Activated naive CD4-positive, alpha-beta T cell treated with anti-CD3 and anti-CD28 coated beads for 36 hours (primary cell): ENCODE measurements at regions of chr15 and their contacts with region 1.

Region 1: GRCh38 chr15:29925227-29926082 is 103.2 kb upstream of the TJP1 start:
- DNase-seq: peak; percentile 53
- H3K4me3 Mint-ChIP-seq: no peak overlapping the region
- H3K27ac Mint-ChIP-seq: no peak overlapping the region
- H3K4me1 Mint-ChIP-seq: no peaks in the 10 kb centered on the region
- H3K27me3 Mint-ChIP-seq: peaks cover 46% of the 10 kb centered on the region

Region 2: DNA sequence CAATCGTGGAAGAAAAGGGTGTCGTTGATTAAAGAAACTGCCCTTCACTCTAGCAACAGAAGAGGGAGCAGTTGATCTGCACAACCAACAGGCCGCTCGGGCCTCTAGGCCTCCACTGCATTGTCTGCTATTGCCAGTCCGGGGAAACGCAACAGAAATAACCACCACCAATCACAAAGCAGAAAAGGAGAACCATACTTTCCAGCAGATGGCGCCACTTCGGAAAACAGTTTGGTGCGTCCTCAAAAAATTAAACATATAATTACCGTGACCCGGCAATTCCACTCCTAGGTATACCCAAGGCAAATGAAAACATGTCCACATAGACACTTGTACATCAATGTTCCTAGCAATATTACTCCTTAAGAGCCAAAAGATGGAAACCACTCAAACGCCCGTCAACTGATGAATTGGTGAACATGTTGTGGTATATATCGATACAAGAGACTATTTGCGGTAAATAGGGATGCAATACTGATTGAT is 257.3 kb before region 1 on chr15:
- CTCF ChIA-PET with region 1: interaction called, 3 read pairs
- intact Hi-C with region 1: loop called (anchors 5 kb)
- DNase-seq: peak; percentile 54
- H3K4me3 Mint-ChIP-seq: no peak overlapping the region
- H3K27ac Mint-ChIP-seq: no peak overlapping the region
- H3K4me1 Mint-ChIP-seq: no peaks in the 10 kb centered on the region
- H3K27me3 Mint-ChIP-seq: peaks cover 18% of the 10 kb centered on the region